ENCODE measurements at regions of chr11 and their contacts with region 1.

Region 1: DNA sequence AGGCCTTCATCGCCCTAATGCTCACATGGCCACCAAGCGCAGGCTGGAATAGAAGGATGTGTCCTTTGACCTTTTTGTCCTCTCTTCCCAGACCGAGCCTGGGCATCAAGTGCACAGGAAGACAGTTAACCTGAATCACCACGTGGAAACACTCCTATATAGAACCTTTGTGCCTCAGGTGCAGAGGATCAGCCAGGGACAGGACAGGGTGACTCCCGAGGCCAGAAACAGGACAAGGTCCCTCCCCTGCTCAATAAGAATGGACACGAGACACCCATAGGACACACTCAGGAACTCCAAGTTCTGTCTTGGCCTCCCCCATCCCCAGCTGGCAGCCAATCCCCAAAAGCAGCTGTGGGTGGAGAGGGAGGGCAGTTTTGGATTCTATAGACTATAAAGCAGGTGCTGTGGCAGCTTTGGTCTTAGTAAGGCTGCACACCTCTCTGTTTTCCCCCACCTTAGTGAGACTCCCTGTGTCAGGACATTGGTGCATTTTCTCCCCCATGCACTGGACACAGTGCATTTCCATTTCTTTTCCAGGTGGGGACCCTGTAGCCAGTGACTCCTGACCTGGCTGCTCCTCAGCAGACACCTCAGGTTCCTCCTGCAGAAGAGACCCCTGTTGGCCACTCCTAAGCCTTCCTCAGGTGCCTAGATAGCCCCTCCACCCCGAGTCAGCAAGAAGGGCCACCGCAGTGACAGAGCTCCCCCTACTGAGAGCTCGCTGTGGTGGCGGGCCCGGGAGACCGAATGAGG is 43.6 kb upstream of the POU2AF1 start:
- DNase-seq: peak; percentile 92
- H3K4me3 ChIP-seq: no peak overlapping the region
- H3K27ac ChIP-seq: peak overlapping the region; percentile 67
- H3K4me1 ChIP-seq: peaks cover 62% of the 10 kb centered on the region
- CTCF ChIP-seq: peak; percentile 99

Region 2: DNA sequence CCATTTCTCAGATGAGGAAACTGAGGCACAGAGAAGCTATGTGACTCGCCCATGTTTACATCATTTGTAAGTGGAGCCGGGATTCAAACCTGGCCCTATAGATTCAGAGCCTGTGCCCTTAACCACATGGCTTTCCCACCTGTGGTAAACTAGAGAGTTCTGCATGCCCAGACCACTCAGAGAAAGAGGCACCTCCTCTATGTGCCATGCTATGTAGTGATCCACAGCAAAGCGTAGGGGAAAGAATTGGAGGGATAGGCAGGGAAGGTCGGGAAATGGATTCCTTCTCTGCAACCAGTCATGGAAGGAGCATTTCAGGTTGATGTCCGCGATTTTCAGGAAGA is 192.6 kb before region 1 on chr11:
- CTCF ChIA-PET with region 1: no interaction called
- POLR2A ChIA-PET with region 1: interaction called, 3 read pairs
- intact Hi-C with region 1: loop called (anchors 1 kb)
- DNase-seq: no peak
- H3K4me3 ChIP-seq: no peak overlapping the region
- H3K27ac ChIP-seq: no peak overlapping the region
- H3K4me1 ChIP-seq: peaks cover 30% of the 10 kb centered on the region
- CTCF ChIP-seq: no peak

Region 3: GRCh38 chr11:111283945-111284481 is 138.7 kb before region 1 on chr11:
- CTCF ChIA-PET with region 1: interaction called, 22 read pairs
- POLR2A ChIA-PET with region 1: interaction called, 33 read pairs
- intact Hi-C with region 1: loop called (anchors 1 kb)
- DNase-seq: no peak
- H3K4me3 ChIP-seq: no peak overlapping the region
- H3K27ac ChIP-seq: no peak overlapping the region
- H3K4me1 ChIP-seq: peaks cover 4% of the 10 kb centered on the region
- CTCF ChIP-seq: no peak

Region 4: DNA sequence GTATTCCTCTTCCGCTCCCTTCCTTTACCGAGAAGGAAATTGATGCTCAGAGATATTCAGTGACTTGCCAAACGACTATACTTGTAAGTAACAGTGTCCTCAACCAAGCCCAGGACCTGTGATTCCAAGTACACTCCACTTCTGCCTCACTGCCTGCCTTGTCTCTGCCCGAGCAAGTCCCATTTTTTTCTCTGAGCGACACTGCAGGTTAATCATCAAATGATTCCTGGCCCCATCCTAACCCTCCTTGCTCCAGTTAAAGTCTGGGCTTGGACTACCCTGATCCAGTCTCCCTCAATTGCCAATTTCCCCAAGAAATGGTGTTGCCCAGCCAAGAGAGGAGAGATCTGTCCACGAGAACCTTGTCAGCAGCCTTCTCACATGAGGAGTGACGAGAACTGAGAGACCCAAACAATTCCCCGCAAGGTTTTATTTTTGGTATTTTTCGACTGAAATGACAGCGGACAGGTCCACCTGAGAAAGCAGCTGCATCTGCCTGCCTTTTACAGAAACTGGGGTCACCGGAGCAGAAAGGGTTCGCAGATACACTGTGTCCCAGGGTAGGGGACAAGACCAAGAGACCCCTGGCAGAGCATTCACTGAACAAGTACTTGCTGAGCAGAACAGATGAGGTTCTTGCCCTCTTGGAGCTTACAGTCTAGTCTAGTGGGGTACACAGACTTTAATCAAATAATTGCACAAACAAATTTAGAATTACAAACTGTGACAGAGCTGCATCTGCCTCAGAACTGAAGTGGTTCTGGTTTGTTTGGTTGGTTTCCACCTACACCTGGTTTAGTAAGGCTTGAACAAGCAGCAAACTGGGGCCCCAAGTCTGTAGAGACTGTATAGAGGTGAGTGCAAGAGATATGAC is 55.0 kb before region 1 on chr11:
- CTCF ChIA-PET with region 1: interaction called, 5 read pairs
- POLR2A ChIA-PET with region 1: interaction called, 577 read pairs
- intact Hi-C with region 1: loop called (anchors 1 kb)
- DNase-seq: peak; percentile 77
- H3K4me3 ChIP-seq: peak overlapping the region; percentile 39
- H3K27ac ChIP-seq: peak overlapping the region; percentile 73
- H3K4me1 ChIP-seq: peaks cover 100% of the 10 kb centered on the region
- CTCF ChIP-seq: no peak

Region 5: DNA sequence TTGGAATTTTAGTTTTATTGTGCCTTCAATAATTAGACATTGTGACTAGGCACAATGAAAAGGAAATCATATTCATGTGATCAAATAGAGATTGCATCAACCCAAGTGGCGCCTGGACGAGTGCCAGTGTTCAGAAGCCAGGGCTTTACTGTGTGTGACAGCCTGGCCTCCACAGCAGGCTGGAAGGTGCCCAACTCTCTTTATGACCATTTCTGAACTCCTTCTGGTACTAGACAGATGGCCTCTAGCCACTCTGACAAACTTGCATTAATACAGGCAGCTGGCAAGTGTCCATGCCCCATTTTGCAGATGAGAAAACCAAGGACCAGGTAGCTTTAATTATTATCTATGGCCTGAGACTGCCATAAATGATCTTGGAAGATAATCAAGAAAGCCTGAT is 35.3 kb before region 1 on chr11:
- CTCF ChIA-PET with region 1: interaction called, 8 read pairs
- POLR2A ChIA-PET with region 1: interaction called, 74 read pairs
- intact Hi-C with region 1: no loop called
- DNase-seq: no peak
- H3K4me3 ChIP-seq: no peak overlapping the region
- H3K27ac ChIP-seq: no peak overlapping the region
- H3K4me1 ChIP-seq: peaks cover 52% of the 10 kb centered on the region
- CTCF ChIP-seq: no peak

Region 6: DNA sequence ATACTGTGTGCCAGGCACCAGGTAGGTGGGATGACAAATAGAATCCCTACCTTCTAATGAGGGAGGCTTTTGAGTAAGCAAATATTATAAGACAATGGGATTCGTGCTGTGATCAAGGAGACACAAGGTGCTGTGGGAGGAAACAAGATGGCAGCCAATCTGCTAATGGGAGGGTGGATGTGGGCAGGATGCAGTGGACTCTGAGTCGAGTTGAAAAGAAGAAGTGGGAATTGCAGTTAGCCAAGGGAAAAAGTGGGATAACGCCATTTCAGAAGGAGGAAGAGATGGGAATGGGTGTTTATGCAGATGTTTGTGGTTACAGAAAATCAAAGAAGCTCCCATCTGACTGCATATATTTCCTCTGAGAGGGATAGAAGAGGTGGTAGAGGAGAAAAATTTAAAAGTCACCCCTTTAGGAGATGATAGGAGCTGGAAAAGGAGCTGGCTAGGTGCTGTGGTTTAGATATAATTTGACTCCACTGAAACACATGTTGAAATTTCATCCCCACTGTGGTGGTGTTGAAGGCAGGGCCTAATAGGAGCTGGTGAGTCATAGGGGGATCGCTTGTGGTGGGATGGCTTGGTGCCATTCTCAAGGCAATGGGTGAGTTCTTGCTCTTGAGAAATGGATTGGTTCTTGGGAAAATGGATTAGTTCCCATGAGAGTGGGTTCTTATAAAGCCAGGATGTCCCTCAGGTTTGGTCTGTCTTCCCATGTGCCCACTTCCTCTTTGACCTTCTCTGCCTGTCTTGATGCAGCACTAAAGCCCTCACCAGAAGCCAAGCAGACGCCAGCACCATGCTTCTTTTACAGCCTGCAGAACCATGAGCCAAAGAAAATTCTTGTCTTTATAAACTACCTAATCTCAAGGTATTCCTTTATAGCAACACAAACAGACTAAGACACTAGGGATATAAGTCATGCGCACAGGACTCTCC is 13.6 kb before region 1 on chr11:
- CTCF ChIA-PET with region 1: interaction called, 3 read pairs
- POLR2A ChIA-PET with region 1: interaction called, 49 read pairs
- intact Hi-C with region 1: no loop called
- DNase-seq: no peak
- H3K4me3 ChIP-seq: peak overlapping the region; percentile 10
- H3K27ac ChIP-seq: peak overlapping the region; percentile 83
- H3K4me1 ChIP-seq: peaks cover 82% of the 10 kb centered on the region
- CTCF ChIP-seq: no peak

Region 7: DNA sequence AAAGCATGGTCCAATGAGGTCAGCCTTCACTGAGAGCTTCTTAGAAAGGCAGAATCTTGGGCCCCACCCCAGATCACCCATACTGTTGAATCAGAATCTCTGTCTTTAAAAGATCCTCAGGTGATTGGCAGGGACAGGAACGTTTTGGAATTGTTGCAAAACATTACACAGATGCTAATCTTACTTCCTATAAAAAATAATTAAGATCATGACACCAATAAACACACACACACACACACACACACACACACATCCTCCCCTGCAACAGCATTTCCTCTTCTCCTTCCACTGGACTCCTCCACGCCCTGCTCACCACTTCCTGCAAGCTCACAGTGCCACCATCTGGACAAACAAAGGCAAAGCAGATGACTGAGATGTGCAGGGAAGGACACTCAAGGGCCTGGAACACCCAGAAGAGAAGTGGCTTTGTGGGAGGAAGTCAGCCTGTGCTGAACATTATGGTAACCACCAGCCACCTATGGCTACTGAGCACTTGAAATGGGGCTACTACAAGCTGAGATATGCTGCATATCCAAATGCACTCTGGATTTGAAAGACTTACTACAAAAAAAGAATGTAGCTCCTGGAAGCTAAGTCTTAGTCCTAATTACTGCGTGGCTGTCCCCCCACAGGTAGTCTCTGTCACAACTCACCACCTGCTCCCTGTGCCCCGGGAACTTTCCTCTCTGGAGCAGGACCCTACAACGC is 23.9 kb after region 1 on chr11:
- CTCF ChIA-PET with region 1: interaction called, 4 read pairs
- POLR2A ChIA-PET with region 1: interaction called, 4 read pairs
- intact Hi-C with region 1: loop called (anchors 1 kb)
- DNase-seq: peak; percentile 96
- H3K4me3 ChIP-seq: no peak overlapping the region
- H3K27ac ChIP-seq: no peak overlapping the region
- H3K4me1 ChIP-seq: peaks cover 53% of the 10 kb centered on the region
- CTCF ChIP-seq: peak; percentile 95